Activated naive CD4-positive, alpha-beta T cell treated with anti-CD3 and anti-CD28 coated beads for 36 hours (primary cell): ENCODE measurements at regions of chr18 and their contacts with region 1.

Region 1: GRCh38 chr18:45664824-45665763 is 49.8 kb downstream of the SLC14A2 start:
- DNase-seq: peak; percentile 82
- H3K4me3 Mint-ChIP-seq: no peak overlapping the region
- H3K27ac Mint-ChIP-seq: no peak overlapping the region
- H3K4me1 Mint-ChIP-seq: peaks cover 52% of the 10 kb centered on the region
- H3K27me3 Mint-ChIP-seq: no peaks in the 10 kb centered on the region

Region 2: GRCh38 chr18:45621061-45621511 is 44.0 kb before region 1 on chr18:
- CTCF ChIA-PET with region 1: interaction called, 6 read pairs
- intact Hi-C with region 1: loop called (anchors 2 kb)
- DNase-seq: peak; percentile 51
- H3K4me3 Mint-ChIP-seq: no peak overlapping the region
- H3K27ac Mint-ChIP-seq: no peak overlapping the region
- H3K4me1 Mint-ChIP-seq: no peaks in the 10 kb centered on the region
- H3K27me3 Mint-ChIP-seq: no peaks in the 10 kb centered on the region

Region 3: DNA sequence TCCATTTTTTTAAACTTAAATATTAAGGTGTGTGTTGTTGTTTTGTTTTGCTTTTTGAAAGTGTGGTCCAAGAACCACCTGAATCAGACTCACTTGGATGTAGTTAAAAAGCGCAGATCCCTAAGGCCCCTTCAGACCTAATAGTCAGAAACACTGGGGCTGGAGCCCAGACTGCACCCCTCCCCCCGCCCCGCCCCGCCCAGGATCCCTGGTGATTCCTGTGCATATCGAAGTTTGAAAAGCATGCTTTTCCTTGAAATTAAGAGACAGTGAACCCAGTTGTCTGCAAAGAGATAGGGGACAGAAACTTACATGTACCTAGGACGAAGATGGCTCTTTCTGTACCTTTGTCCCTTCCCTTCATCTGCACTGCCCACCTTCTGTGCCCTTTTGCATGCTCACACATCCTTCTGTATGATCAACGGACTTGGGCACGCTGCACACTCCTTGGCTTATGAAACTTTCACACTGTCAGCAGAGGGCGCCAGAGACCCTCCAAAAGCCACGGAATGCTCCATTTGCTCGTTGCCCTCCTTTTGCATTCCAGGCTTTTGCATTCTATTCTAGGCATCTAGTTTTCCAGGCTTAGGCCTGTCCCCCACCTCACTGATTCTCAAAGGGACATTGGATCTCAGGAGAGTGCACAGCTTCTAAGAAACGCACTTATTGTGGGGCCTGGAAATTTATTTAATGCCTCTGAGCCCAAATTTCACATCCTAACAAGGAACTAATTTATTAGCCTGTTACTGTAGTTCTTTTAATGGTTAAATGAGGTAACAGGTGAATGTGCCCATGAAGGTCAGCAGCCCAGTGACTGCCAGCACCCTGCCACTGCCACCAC is 26.1 kb after region 1 on chr18:
- CTCF ChIA-PET with region 1: interaction called, 159 read pairs
- intact Hi-C with region 1: loop called (anchors 1 kb)
- DNase-seq: peak; percentile 89
- H3K4me3 Mint-ChIP-seq: no peak overlapping the region
- H3K27ac Mint-ChIP-seq: no peak overlapping the region
- H3K4me1 Mint-ChIP-seq: peaks cover 36% of the 10 kb centered on the region
- H3K27me3 Mint-ChIP-seq: no peaks in the 10 kb centered on the region

Region 4: DNA sequence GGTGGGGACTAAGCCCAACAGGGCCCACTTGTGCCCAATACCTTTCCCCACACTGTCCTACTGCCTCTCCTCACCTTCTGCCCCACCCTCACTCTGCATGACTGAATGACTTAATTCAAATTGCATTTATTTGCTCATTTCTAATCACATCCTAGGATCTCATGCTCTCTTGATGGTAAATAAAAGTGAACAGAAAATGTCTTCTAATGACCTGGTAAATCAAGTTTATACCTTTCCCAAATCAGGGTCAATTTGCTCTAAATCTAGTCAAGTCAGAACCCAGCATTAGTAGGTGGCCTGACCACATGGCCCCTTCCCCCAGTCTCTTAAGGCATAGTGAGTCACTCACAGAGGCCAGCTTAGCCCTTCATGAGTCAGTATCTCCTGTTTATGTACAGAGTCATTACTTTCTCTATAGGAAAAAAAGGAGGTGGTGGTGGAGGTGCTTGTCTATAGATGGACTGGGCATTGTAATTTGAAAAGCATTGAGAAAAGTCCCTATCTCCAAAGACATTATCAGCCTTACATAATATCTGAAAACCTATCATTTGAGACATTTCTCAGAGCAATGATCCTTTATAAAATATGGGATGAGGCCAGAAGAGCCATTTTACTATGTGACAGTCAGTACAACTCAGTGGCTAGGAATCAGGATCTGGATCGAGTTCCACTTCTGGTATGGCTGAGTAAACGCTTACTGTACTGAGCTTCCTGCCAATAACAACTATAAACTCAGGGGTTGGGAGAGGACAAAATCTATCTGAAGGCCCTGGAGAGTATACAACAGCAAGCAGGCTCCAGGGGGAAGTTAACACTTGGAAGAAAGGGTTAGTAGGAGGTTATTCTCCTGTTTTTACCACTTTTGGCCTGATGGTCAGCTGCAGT is 137.8 kb after region 1 on chr18:
- CTCF ChIA-PET with region 1: interaction called, 5 read pairs
- intact Hi-C with region 1: loop called (anchors 1 kb)
- DNase-seq: peak; percentile 29
- H3K4me3 Mint-ChIP-seq: no peak overlapping the region
- H3K27ac Mint-ChIP-seq: no peak overlapping the region
- H3K4me1 Mint-ChIP-seq: peaks cover 3% of the 10 kb centered on the region
- H3K27me3 Mint-ChIP-seq: peaks cover 8% of the 10 kb centered on the region

Region 5: DNA sequence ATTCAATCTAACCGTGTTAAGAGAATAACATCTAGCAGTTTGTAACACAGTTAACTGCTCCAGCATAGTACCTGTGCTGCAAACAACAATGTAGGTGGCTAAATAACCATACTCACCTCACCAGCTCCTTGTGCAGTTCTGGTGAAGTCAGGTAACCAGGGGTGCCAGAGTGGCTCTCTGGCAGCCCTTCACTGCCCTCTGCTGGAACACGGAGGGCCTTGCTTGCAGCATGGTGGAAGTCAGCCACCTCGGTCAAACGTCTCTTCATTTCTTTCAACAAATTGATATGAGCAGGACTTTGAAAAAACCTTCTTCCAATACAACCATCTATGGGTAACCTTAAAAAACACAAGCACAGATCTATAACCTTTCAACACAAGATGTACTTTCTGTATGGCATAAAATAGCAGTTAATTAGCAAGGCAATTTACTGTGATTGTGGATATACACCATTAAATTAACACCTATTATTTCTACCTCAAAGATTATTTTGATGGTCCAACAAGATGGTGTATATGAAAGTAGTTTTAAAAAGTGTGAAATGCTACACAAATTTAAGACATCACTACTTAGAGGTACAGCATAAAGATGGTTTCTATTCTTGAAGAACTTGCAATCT is 245.4 kb after region 1 on chr18:
- CTCF ChIA-PET with region 1: interaction called, 19 read pairs
- intact Hi-C with region 1: loop called (anchors 1 kb)
- DNase-seq: peak; percentile 76
- H3K4me3 Mint-ChIP-seq: no peak overlapping the region
- H3K27ac Mint-ChIP-seq: no peak overlapping the region
- H3K4me1 Mint-ChIP-seq: no peaks in the 10 kb centered on the region
- H3K27me3 Mint-ChIP-seq: no peaks in the 10 kb centered on the region

Region 6: GRCh38 chr18:45958730-45959129 is 293.6 kb after region 1 on chr18:
- CTCF ChIA-PET with region 1: no interaction called
- intact Hi-C with region 1: no loop called
- DNase-seq: peak; percentile 15
- H3K4me3 Mint-ChIP-seq: no peak overlapping the region
- H3K27ac Mint-ChIP-seq: no peak overlapping the region
- H3K4me1 Mint-ChIP-seq: peaks cover 62% of the 10 kb centered on the region
- H3K27me3 Mint-ChIP-seq: no peaks in the 10 kb centered on the region

Region 7: DNA sequence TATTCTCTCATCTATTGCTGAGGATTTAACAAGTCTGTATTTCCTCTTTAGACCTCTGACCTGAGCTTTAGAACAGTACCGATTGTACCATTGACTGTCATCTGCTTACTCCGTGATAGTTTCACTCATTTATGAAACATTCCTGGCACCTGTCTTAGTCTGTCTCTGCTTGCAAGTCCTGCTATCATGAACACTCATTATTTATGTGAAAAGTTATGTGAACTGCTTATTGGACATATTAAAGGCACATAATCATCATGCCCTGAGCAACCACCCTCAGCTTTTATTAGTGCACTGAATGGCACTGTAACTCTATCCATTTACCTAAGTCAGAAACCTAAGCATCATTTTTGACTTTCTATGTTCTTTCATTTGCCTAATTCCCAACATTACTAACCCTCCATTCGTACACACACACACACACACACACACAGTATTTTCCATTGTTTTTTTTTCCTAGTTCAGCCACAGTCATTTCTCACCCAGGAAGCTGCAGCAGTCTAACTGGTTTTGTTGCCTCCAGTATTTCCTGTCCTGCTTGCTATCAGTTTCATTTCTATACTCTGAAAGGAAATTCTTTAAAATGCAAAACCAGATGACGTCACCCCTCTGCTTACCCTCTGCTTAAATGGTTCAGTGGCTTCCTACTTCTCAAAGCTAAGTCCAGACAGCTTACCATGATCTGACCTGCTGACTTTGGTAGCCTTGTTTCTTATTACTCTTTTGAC is 585.2 kb after region 1 on chr18:
- CTCF ChIA-PET with region 1: no interaction called
- intact Hi-C with region 1: no loop called
- DNase-seq: peak; percentile 66
- H3K4me3 Mint-ChIP-seq: peak overlapping the region; percentile 60
- H3K27ac Mint-ChIP-seq: peak overlapping the region; percentile 88
- H3K4me1 Mint-ChIP-seq: peaks cover 58% of the 10 kb centered on the region
- H3K27me3 Mint-ChIP-seq: no peaks in the 10 kb centered on the region